ENCODE measurements at regions of chr3 and their contacts with region 1.

Region 1: GRCh38 chr3:159260049-159260662 is 458.3 kb downstream of the MFSD1 start:
- DNase-seq: peak; percentile 77
- H3K4me3 Mint-ChIP-seq: no peak overlapping the region
- H3K27ac Mint-ChIP-seq: no peak overlapping the region
- H3K4me1 Mint-ChIP-seq: no peaks in the 10 kb centered on the region
- H3K27me3 Mint-ChIP-seq: peaks cover 49% of the 10 kb centered on the region
- CTCF ChIP-seq: peak; percentile 81

Region 2: GRCh38 chr3:158863247-158863646 is 396.9 kb before region 1 on chr3:
- CTCF ChIA-PET with region 1: interaction called, 30 read pairs
- POLR2A ChIA-PET with region 1: no interaction called
- intact Hi-C with region 1: no loop called
- DNase-seq: no peak
- H3K4me3 Mint-ChIP-seq: no peak overlapping the region
- H3K27ac Mint-ChIP-seq: no peak overlapping the region
- H3K4me1 Mint-ChIP-seq: no peaks in the 10 kb centered on the region
- H3K27me3 Mint-ChIP-seq: no peaks in the 10 kb centered on the region
- CTCF ChIP-seq: no peak

Region 3: GRCh38 chr3:159503944-159504343 is 243.8 kb after region 1 on chr3:
- CTCF ChIA-PET with region 1: no interaction called
- POLR2A ChIA-PET with region 1: no interaction called
- intact Hi-C with region 1: loop called (anchors 1 kb)
- DNase-seq: no peak
- H3K4me3 Mint-ChIP-seq: no peak overlapping the region
- H3K27ac Mint-ChIP-seq: no peak overlapping the region
- H3K4me1 Mint-ChIP-seq: peaks cover 4% of the 10 kb centered on the region
- H3K27me3 Mint-ChIP-seq: no peaks in the 10 kb centered on the region
- CTCF ChIP-seq: no peak

Region 4: DNA sequence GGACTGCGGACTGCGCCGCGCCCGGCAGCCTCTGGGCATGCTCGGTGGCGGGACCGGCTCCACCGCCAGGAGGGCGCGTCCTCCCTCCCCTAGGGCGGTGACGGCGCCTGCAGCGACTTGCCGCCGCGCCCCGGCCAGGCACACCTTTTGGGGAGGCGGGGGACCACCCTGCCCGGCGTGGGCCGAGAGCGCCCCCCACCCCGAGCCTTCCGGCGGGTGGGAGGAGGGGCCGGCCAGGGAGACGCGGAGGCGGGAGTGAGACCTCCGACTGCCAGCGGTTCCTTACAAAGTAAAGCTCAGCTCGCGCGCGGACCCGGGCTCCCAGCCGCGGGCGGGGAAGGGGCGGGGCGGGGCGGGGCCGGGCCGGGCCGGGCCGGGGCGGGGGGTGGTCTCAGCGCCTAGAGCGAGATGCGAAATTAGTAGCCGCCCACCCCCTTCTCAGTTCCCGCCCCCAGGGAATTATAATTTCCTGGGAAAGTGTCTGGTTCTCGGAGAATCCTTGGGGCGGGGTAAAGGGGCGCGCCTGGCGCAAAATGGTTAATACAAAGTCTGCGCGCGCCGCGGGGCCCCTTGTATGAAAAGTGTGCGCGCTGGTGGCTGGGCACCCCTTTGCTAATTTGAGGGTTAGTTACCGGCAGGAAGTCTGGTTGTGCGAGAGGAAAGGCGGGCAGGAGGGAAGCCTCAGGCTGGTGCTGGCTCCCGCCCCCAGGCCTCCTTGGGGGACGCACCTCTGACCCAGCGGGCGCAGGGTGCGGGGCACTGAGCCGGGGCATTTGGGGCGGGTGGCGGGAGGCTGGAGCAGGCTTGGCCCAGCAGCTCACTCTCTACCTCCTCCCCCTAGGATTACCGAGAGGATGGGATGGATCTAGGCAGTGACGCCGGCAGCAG is 503.7 kb after region 1 on chr3:
- CTCF ChIA-PET with region 1: interaction called, 4 read pairs
- POLR2A ChIA-PET with region 1: no interaction called
- intact Hi-C with region 1: loop called (anchors 1 kb)
- DNase-seq: peak; percentile 81
- H3K4me3 Mint-ChIP-seq: peak overlapping the region; percentile 81
- H3K27ac Mint-ChIP-seq: peak overlapping the region; percentile 90
- H3K4me1 Mint-ChIP-seq: peaks cover 40% of the 10 kb centered on the region
- H3K27me3 Mint-ChIP-seq: no peaks in the 10 kb centered on the region
- CTCF ChIP-seq: no peak

Region 5: DNA sequence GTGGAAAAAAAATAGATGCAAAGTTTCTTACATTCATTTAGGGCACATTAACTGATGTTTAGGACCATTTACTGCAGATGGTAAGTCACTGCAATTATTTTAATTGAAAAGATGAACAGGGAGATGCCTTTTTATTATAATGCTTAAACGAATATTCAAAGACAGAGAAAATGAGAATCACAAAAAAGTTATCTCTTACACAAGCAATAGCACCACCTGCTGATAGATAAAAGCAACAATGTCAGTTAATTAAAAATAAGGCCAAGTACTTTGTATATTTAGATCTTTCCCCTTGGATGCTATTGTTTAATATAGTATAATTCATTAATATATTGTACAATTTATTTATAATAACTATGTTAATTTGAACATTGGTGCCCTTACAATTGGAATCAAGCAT is 1083.0 kb after region 1 on chr3:
- CTCF ChIA-PET with region 1: no interaction called
- POLR2A ChIA-PET with region 1: no interaction called
- intact Hi-C with region 1: loop called (anchors 10 kb)
- DNase-seq: peak; percentile 36
- H3K4me3 Mint-ChIP-seq: no peak overlapping the region
- H3K27ac Mint-ChIP-seq: no peak overlapping the region
- H3K4me1 Mint-ChIP-seq: no peaks in the 10 kb centered on the region
- H3K27me3 Mint-ChIP-seq: no peaks in the 10 kb centered on the region
- CTCF ChIP-seq: peak; percentile 47